PC-3 (cell line): ENCODE measurements at regions of chr7 and their contacts with region 1.

Region 1: GRCh38 chr7:107150375-107151073 is 18.3 kb upstream of the HBP1 start:
- DNase-seq: peak; percentile 74
- ATAC-seq: peak; percentile 53
- H3K4me3 ChIP-seq: no peak overlapping the region
- H3K27ac ChIP-seq: no peak overlapping the region
- H3K4me1 ChIP-seq: peaks cover 9% of the 10 kb centered on the region
- H3K27me3 ChIP-seq: no peaks in the 10 kb centered on the region
- CTCF ChIP-seq: peak; percentile 77

Region 2: DNA sequence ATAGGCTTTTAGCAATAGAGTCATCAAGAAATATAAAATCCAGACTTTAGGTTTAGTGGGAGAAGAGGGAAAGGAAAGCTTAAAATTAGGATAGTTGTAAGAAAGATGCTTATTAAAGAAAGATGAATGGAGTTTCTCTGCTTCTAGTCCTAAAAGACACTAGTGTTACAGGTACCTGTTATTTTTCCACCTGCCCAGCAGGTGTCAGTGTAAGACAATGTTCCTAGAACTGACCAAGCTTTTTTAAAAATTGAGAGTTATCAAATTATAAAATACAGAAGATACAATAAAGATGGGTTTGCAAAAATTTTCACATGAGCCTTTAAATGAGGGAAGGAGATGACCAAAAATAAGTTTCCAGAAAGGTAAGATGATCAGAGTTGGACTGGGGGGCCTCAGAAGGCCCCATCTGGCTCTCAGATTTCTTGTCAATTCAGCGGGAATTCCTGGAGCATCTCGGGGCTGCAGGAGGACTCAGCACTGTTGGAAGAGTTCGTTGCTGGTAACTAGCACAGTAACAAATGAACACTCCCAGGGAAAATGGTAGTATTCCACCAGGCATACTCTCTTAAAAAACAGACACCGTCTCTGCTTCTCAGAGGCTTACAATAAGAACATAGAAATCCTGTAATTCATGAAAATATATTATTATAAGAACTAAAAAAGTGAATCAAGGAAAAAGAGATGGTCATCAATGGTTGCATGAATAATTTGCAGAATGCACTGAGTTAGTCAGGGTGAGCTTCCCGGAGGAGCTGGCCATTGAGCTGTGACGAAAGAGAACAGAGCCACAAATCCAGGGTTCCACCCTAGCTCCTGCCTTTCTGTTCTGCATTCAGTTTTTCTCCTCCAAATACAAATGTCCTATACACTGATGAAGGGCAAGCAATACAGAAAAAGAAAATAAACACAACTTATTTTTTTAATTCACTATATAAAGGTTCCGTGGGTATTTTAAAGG is 357.2 kb before region 1 on chr7:
- CTCF ChIA-PET with region 1: interaction called, 3 read pairs
- POLR2A ChIA-PET with region 1: no interaction called
- intact Hi-C with region 1: loop called (anchors 1 kb)
- DNase-seq: peak; percentile 55
- ATAC-seq: peak; percentile 42; the same call in 1 of the 2 replicates
- H3K4me3 ChIP-seq: no peak overlapping the region
- H3K27ac ChIP-seq: no peak overlapping the region
- H3K4me1 ChIP-seq: peaks cover 3% of the 10 kb centered on the region; the same call in 1 of the 2 replicates
- H3K27me3 ChIP-seq: no peaks in the 10 kb centered on the region
- CTCF ChIP-seq: peak; percentile 79

Region 3: DNA sequence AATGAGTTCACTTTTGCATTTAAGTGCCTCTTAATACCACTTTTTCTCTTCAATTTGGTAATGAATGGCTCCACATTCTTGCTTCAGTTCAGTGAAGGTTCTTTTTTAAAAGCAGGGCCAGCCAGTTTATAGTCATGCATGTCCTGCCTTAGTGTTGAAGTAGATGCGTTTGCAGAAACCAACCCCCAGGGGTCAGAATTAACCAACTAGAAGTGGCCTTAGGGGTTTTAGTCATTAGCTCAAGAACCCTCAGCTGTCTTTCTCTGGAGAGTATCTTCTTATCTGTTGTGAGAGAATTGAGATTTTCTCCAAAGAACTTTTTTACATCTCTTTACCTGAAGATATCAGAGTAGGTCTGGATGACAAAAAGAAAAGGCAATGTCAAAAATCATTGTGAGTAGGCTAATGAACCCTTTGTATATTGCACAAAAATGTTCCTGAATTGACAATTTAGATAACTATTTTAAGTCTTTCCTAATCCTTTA is 203.2 kb before region 1 on chr7:
- CTCF ChIA-PET with region 1: interaction called, 8 read pairs
- POLR2A ChIA-PET with region 1: no interaction called
- intact Hi-C with region 1: loop called (anchors 1 kb)
- DNase-seq: peak; percentile 72
- ATAC-seq: peak; percentile 87
- H3K4me3 ChIP-seq: no peak overlapping the region
- H3K27ac ChIP-seq: no peak overlapping the region
- H3K4me1 ChIP-seq: no peaks in the 10 kb centered on the region
- H3K27me3 ChIP-seq: peaks cover 48% of the 10 kb centered on the region
- CTCF ChIP-seq: peak; percentile 78

Region 4: DNA sequence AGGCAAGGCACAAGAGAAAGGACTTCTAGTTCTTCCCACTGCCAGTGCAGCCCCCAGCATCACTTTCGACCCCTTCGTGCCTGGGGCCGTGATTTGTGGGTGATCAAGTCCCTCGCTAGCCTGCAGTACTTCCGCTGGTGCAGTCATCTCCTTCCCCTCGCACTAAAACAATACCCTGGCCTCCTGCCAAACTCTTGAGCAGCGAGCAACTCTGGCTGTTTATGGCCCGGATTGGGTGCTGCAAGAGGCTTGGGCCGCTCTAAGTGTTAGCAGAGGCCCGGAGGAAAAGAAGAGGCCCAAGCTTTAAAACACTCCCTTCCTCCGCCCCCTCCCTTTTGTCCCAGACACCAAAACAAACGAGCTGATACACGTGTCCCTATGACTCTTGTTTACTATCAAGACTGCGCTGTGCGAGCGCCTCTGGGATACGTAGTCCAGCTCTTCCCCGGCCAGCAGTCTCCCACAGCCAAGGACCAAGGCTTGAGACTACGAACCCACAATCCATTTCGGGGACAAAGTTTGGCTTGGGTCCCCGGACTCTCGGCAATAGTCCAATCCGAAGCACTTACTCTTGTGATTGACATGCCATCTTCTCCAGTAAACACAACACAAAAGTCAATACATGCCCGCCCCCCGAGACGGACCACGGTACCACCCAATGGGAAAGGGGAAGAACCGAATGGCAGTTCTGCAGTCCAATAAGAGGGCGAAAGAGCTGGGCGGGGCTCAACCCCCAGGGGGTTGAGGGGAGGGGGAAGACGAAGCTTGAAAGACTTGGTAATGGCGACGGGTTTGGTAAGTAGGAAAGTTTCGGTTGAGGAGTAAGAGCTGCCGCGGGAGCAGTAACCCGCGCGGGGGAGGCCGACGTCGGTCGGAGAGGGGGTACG is 18.0 kb after region 1 on chr7 and contains the start of gene HBP1:
- CTCF ChIA-PET with region 1: interaction called, 11 read pairs
- POLR2A ChIA-PET with region 1: no interaction called
- intact Hi-C with region 1: loop called (anchors 1 kb)
- DNase-seq: peak; percentile 99
- ATAC-seq: peak; percentile 90
- H3K4me3 ChIP-seq: peak within 1 kb of the TSS; percentile 86
- H3K27ac ChIP-seq: peak within 1 kb of the TSS; percentile 65
- H3K4me1 ChIP-seq: peaks cover 20% of the 10 kb centered on the region
- H3K27me3 ChIP-seq: no peaks in the 10 kb centered on the region
- CTCF ChIP-seq: no peak
- total RNA-seq, gene HBP1: 13.0 and 17.6 TPM in 2 replicates

Region 5: DNA sequence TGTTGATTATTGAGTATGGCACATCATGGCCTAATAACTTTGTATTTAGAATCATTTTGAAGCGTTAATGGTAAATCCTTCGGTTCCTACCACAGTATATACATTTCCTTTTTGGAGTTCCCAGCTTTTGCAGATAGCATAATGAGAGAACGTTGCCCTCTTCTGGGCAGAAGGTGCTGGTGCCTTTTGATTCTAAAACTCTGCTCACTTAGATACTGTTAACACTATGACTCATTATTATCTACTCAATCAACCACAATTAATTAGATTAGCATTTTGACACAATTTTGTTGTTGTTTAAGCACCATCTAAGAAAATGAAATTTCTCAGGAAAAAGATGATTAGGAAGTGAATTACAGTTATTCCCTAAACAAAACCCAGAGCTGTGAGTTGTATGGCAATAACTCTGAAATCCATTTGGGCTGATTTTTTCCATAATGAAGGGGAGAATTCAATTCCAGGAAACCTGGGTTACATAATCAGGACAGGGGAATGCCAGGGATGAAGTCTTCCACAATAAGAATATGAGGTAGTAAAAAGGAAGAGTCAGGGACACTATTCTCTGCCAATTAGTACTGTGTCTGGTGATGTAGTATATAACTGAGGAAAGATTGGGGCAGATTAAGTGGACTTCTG is 729.0 kb after region 1 on chr7:
- CTCF ChIA-PET with region 1: interaction called, 8 read pairs
- POLR2A ChIA-PET with region 1: no interaction called
- intact Hi-C with region 1: loop called (anchors 10 kb)
- DNase-seq: peak; percentile 70
- ATAC-seq: peak; percentile 78
- H3K4me3 ChIP-seq: peak overlapping the region; percentile 38; the same call in 1 of the 2 replicates
- H3K27ac ChIP-seq: no peak overlapping the region
- H3K4me1 ChIP-seq: peaks cover 5% of the 10 kb centered on the region; the same call in 1 of the 2 replicates
- H3K27me3 ChIP-seq: no peaks in the 10 kb centered on the region
- CTCF ChIP-seq: peak; percentile 79